ENCODE measurements at regions of chr20 and their contacts with region 1.

Region 1: GRCh38 chr20:1375515-1375914 is 17.3 kb downstream of the FKBP1A start:
- DNase-seq: no peak

Region 2: DNA sequence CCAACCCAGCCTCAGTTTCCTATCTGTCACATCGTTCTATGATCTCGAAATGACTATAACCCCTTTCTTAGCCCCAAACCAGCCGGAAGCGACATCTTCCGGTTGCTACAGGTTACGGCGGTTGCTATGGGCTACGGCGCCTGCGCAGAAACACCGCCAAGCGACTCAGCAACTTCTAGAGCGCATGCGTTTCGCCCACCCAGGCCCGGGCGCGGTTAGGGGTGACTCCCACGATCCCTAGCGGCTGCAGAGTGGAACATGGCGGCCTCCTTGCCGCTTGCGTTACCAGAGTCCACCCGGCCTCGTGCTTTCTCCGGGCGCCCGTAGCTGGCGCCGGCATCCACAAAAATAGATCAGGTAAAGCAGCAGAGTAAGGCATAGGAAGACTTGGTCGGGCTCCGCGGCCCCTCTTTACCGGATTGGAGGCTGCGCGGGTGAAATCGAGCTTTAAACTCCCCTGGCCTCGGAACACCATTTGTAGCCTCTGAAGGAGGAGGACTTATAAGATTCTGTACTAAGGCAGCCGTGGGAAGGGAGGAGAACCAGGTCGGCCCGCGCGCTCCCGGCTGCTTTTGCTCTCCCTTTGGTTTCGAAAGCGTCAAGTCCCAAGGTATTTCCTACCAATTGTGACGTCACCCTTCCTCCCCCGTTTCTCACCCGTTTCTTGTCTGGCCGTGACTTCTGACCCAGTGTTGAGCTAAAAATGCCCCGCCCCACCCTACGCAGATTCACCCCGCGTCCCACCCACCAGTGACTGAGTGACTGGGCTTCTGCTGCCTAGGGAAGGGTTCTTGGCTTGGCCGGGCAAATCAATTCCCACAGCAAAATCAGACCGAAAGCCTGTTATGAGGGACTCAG is 50.1 kb before region 1 on chr20:
- intact Hi-C with region 1: loop called (anchors 5 kb)
- DNase-seq: peak; percentile 98

Region 3: GRCh38 chr20:1336699-1337367 is 38.7 kb before region 1 on chr20:
- intact Hi-C with region 1: loop called (anchors 2 kb)
- DNase-seq: peak; percentile 89

Region 4: DNA sequence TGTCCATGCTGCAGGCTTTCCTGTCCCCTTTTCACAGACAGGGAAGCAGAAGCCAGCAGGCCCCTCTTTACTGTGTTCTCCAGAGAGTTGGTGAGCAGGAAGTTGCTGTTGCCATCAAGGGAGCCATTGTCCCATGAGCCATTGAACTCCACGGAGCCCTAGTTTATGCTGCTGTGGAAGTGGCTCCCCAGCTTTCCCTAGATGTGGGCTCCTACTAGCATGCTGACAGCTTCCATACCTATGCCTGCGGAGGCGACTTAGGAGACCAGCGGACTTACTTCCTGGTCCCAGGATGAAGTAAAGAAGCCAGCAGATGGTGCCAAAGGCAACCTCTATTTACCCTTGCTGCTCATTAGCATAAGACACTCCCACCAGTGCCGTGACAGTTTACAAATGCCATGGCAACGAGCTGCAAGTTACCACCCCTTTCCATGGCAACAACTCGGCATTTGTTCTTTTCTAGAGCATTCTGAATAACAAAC is 48.2 kb after region 1 on chr20:
- intact Hi-C with region 1: no loop called
- DNase-seq: no peak

Region 5: GRCh38 chr20:1466211-1467081 is 90.9 kb after region 1 on chr20 and contains the start of gene NSFL1C:
- intact Hi-C with region 1: no loop called
- DNase-seq: peak; percentile 98
- total RNA-seq, gene NSFL1C: 64.0 TPM